ENCODE measurements at regions of chr7 and their contacts with region 1.

Region 1: GRCh38 chr7:30184791-30185487 is 50.2 kb downstream of the MTURN start:
- DNase-seq: no peak
- ATAC-seq: peak; percentile 42
- H3K4me3 ChIP-seq: no peak overlapping the region
- H3K27ac ChIP-seq: no peak overlapping the region
- H3K4me1 ChIP-seq: peaks cover 7% of the 10 kb centered on the region; the same call in 1 of the 2 replicates
- H3K27me3 ChIP-seq: no peaks in the 10 kb centered on the region
- CTCF ChIP-seq: no peak
- EP300 ChIP-seq: no peak
- POLR2A ChIP-seq: no peak
- RAD21 ChIP-seq: no peak

Region 2: GRCh38 chr7:29764227-29764626 is 420.7 kb before region 1 on chr7:
- CTCF ChIA-PET with region 1: no interaction called
- POLR2A ChIA-PET with region 1: no interaction called
- RAD21 ChIA-PET with region 1: no interaction called
- SMC1A ChIA-PET with region 1: no interaction called
- in situ Hi-C with region 1: no loop called
- intact Hi-C with region 1: no loop called
- DNase-seq: no peak
- ATAC-seq: no peak
- H3K4me3 ChIP-seq: no peak overlapping the region
- H3K27ac ChIP-seq: no peak overlapping the region
- H3K4me1 ChIP-seq: no peaks in the 10 kb centered on the region
- H3K27me3 ChIP-seq: peaks cover 2 to 4% of the 10 kb centered on the region in 2 experiments; a peak in 1 of 4 replicates
- CTCF ChIP-seq: no peak
- EP300 ChIP-seq: no peak
- POLR2A ChIP-seq: no peak
- RAD21 ChIP-seq: no peak

Region 3: DNA sequence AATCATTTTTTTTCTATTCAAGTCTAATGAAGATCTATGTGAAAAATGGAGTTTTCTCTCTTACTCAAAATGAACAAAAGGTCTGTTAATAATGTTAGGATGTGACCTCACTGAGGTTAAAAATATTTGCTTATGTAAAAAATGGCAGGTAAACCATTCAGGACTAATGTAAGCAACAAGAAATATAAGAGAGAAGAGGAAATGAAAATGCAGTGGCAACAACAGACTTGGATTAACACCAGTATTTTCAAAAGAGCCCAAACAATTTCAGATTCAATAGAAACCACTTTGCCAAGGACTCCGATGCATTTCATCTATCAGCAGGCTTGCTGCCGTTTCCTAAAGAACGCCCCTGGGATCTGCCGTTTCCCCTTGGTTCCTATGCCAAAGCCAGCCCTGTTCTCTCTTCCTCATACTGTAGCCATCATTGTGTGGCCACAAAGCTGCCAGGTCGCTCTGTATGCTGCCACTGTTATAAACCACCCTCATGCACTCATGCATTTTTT is 16.3 kb after region 1 on chr7:
- CTCF ChIA-PET with region 1: interaction called, 3 read pairs
- POLR2A ChIA-PET with region 1: interaction called, 6 read pairs
- RAD21 ChIA-PET with region 1: interaction called, 22 read pairs
- SMC1A ChIA-PET with region 1: interaction called, 80 read pairs
- in situ Hi-C with region 1: no loop called
- intact Hi-C with region 1: loop called (anchors 2 kb)
- DNase-seq: peak; percentile 51
- ATAC-seq: peak; percentile 92
- H3K4me3 ChIP-seq: 0 out of 2 replicates have a peak overlapping the region, but pooled peaks have one; percentile 14
- H3K27ac ChIP-seq: peak overlapping the region; percentile 17; the same call in 1 of the 2 replicates
- H3K4me1 ChIP-seq: peaks cover 19% of the 10 kb centered on the region
- H3K27me3 ChIP-seq: no peaks in the 10 kb centered on the region
- CTCF ChIP-seq: no peak
- EP300 ChIP-seq: peak; percentile 76 to 80; a peak in 2 of 4 replicates
- POLR2A ChIP-seq: no peak
- RAD21 ChIP-seq: no peak

Region 4: DNA sequence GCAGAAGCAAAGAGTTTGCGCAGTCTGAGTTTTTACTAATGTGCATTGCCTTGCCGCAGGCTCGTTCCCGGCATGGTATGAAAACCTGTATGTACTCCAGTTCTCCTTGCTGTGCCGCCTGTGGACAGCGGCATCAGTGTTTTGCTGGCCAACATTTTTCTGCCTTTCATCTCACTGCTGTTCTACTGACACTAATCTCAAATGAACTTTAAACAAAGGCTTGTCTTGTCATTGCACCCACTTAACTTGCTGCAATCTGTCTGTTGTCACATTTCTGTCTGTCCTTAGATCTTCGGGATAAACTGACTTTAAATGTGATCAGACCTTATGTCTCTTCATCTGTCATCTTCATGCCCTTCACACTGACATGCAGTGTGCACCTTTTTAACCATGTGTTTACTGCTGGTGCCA is 27.8 kb after region 1 on chr7:
- CTCF ChIA-PET with region 1: interaction called, 4 read pairs
- POLR2A ChIA-PET with region 1: interaction called, 5 read pairs
- RAD21 ChIA-PET with region 1: interaction called, 6 read pairs
- SMC1A ChIA-PET with region 1: interaction called, 44 read pairs
- in situ Hi-C with region 1: no loop called
- intact Hi-C with region 1: no loop called
- DNase-seq: no peak
- ATAC-seq: no peak
- H3K4me3 ChIP-seq: no peak overlapping the region
- H3K27ac ChIP-seq: no peak overlapping the region
- H3K4me1 ChIP-seq: peaks cover 12% of the 10 kb centered on the region; the same call in 1 of the 2 replicates
- H3K27me3 ChIP-seq: no peaks in the 10 kb centered on the region
- CTCF ChIP-seq: no peak
- EP300 ChIP-seq: no peak
- POLR2A ChIP-seq: no peak
- RAD21 ChIP-seq: no peak

Region 5: DNA sequence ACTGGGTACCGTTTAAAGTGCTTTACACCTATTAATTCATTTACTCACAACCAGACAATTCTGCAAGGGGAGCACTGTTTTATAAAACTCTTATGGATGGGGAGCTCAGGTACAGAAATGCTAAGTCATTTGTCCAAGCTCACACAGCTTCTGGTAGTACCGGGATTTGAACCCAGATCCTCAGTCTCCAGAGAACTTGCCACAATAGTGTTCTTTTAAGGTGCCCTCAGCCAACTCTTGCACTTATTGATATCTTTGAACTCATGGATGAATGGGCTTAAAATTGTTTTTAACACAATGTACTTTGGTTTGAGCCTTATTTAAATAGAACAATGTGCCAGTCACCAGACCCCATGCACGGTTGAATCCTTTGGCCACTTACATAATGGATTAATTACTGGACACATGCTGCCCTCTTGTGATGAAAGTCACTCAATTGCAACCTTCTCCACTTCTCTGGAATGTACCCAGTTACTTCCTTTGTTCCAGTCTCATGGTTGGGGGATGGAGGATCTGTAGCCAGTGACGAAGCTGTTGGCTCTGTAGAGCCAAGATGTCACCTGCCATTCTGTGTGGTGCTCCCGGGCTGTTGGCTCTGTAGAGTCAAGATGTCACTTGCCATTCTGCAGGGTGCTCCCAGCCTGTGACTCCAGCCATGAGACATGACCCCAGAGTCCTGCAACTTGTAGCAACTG is 228.0 kb after region 1 on chr7:
- CTCF ChIA-PET with region 1: no interaction called
- POLR2A ChIA-PET with region 1: no interaction called
- RAD21 ChIA-PET with region 1: no interaction called
- SMC1A ChIA-PET with region 1: no interaction called
- in situ Hi-C with region 1: no loop called
- intact Hi-C with region 1: no loop called
- DNase-seq: peak; percentile 16
- ATAC-seq: peak; percentile 75
- H3K4me3 ChIP-seq: no peak overlapping the region
- H3K27ac ChIP-seq: no peak overlapping the region
- H3K4me1 ChIP-seq: peaks cover 8% of the 10 kb centered on the region
- H3K27me3 ChIP-seq: no peaks in the 10 kb centered on the region
- CTCF ChIP-seq: peak; percentile 38 to 59 (median 40); a peak in 5 of 6 replicates
- EP300 ChIP-seq: no peak
- POLR2A ChIP-seq: no peak
- RAD21 ChIP-seq: peak; percentile 70

Measured in GM12878 (cell line).